Breast epithelium (tissue), 4 donors: ENCODE measurements at regions of chr1 and their contacts with region 1.

Region 1: DNA sequence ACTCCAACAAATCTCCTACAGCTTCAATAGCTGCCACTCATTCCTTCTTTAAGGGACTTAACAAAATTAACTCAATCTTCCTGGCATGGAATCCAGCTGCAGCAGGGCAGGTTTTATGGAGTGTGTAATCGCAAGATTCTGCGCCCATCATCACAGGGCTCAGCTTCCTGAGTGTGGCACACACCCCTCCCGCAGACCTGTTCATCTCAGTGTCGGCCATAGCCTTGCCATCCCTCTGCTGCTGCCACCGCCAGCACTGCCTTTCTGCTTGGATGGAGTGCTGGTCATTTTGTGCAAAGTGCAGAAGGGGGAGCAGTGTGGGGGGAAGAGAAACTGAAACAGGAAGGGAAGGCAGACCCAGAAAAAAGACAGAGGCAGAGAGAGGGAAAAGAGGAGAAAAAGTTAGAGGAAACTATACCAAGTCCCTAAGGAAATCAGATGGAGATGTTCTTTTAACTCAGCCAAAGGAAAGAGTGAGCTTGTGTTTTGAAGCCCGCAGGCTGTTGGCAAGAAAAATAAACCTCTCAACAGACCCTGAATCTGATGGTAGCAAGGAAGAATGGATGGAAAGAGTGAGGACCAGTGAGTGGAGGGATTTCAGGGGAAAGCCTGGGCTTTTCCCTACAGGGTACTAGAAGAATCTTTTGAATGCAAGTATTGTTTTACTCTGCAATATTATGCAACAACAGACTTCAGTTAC is 324.2 kb downstream of the SEC16B start:
- DNase-seq: no peak
- H3K4me3 ChIP-seq: no peak overlapping the region
- H3K27ac ChIP-seq: no peak overlapping the region
- H3K4me1 ChIP-seq: no peaks in the 10 kb centered on the region
- H3K27me3 ChIP-seq: no peaks in the 10 kb centered on the region
- CTCF ChIP-seq: no peak
- POLR2A ChIP-seq: no peak

Region 2: GRCh38 chr1:176539018-176539417 is 1106.6 kb before region 1 on chr1:
- intact Hi-C with region 1: loop called (anchors 5 kb)
- DNase-seq: no peak
- H3K4me3 ChIP-seq: no peak overlapping the region
- H3K27ac ChIP-seq: no peak overlapping the region
- H3K4me1 ChIP-seq: no peaks in the 10 kb centered on the region
- H3K27me3 ChIP-seq: no peaks in the 10 kb centered on the region
- CTCF ChIP-seq: no peak
- POLR2A ChIP-seq: no peak

Region 3: GRCh38 chr1:177103005-177103852 is 542.4 kb before region 1 on chr1:
- intact Hi-C with region 1: loop called (anchors 5 kb)
- DNase-seq: no peak
- H3K4me3 ChIP-seq: no peak overlapping the region
- H3K27ac ChIP-seq: no peak overlapping the region
- H3K4me1 ChIP-seq: no peaks in the 10 kb centered on the region
- H3K27me3 ChIP-seq: no peaks in the 10 kb centered on the region
- CTCF ChIP-seq: no peak
- POLR2A ChIP-seq: no peak